ENCODE measurements at regions of chr4 and their contacts with region 1.

Region 1: GRCh38 chr4:75940692-75941253 is at the start of gene NAAA:
- DNase-seq: peak; percentile 91
- ATAC-seq: peak; percentile 75
- H3K4me3 ChIP-seq: peak within 1 kb of the TSS; percentile 80 to 98 (median 97)
- H3K4me3 Mint-ChIP-seq: peak within 1 kb of the TSS; percentile 99
- H3K27ac ChIP-seq: peak within 1 kb of the TSS; percentile 78 to 79
- H3K27ac Mint-ChIP-seq: peak within 1 kb of the TSS; percentile 98
- H3K4me1 ChIP-seq: peaks cover 5 to 14% of the 10 kb centered on the region in 2 donors
- H3K4me1 Mint-ChIP-seq: peaks cover 14% of the 10 kb centered on the region
- H3K27me3 ChIP-seq: no peaks in the 10 kb centered on the region
- H3K27me3 Mint-ChIP-seq: no peaks in the 10 kb centered on the region
- CTCF ChIP-seq: no peak
- total RNA-seq, gene NAAA: 50.4 and 51.4 TPM in 2 replicates

Region 2: GRCh38 chr4:74996996-74997395 is 943.8 kb before region 1 on chr4:
- CTCF ChIA-PET with region 1: no interaction called
- POLR2A ChIA-PET with region 1: no interaction called
- intact Hi-C with region 1: no loop called
- DNase-seq: no peak
- ATAC-seq: no peak
- H3K4me3 ChIP-seq: no peak overlapping the region
- H3K4me3 Mint-ChIP-seq: no peak overlapping the region
- H3K27ac ChIP-seq: no peak overlapping the region
- H3K27ac Mint-ChIP-seq: no peak overlapping the region
- H3K4me1 ChIP-seq: no peaks in the 10 kb centered on the region
- H3K4me1 Mint-ChIP-seq: peaks cover 9% of the 10 kb centered on the region
- H3K27me3 ChIP-seq: no peaks in the 10 kb centered on the region
- H3K27me3 Mint-ChIP-seq: no peaks in the 10 kb centered on the region
- CTCF ChIP-seq: no peak

Region 3: GRCh38 chr4:75514131-75514948 is 426.4 kb before region 1 on chr4 and contains the starts of genes RCHY1 and THAP6:
- CTCF ChIA-PET with region 1: no interaction called
- POLR2A ChIA-PET with region 1: interaction called, 3 read pairs
- intact Hi-C with region 1: loop called (anchors 1 kb)
- DNase-seq: peak; percentile 96
- ATAC-seq: peak; percentile 87
- H3K4me3 ChIP-seq: peak within 1 kb of the TSS; percentile 76 to 94 (median 85)
- H3K4me3 Mint-ChIP-seq: no peak within 1 kb of the TSS
- H3K27ac ChIP-seq: peak within 1 kb of the TSS; percentile 93 to 96
- H3K27ac Mint-ChIP-seq: peak within 1 kb of the TSS; percentile 97
- H3K4me1 ChIP-seq: peaks cover 29 to 32% of the 10 kb centered on the region in 2 donors
- H3K4me1 Mint-ChIP-seq: peaks cover 36% of the 10 kb centered on the region
- H3K27me3 ChIP-seq: no peaks in the 10 kb centered on the region
- H3K27me3 Mint-ChIP-seq: no peaks in the 10 kb centered on the region
- CTCF ChIP-seq: peak; percentile 7
- total RNA-seq, gene RCHY1: 33.3 and 34.5 TPM in 2 replicates
- total RNA-seq, gene THAP6: 34.5 and 38.3 TPM in 2 replicates

Region 4: GRCh38 chr4:75849461-75849860 is 91.3 kb before region 1 on chr4:
- CTCF ChIA-PET with region 1: no interaction called
- POLR2A ChIA-PET with region 1: no interaction called
- intact Hi-C with region 1: no loop called
- DNase-seq: no peak
- ATAC-seq: no peak
- H3K4me3 ChIP-seq: no peak overlapping the region
- H3K4me3 Mint-ChIP-seq: no peak overlapping the region
- H3K27ac ChIP-seq: no peak overlapping the region
- H3K27ac Mint-ChIP-seq: no peak overlapping the region
- H3K4me1 ChIP-seq: no peaks in the 10 kb centered on the region
- H3K4me1 Mint-ChIP-seq: peaks cover 6% of the 10 kb centered on the region
- H3K27me3 ChIP-seq: peaks cover 0 to 3% (median 0%) of the 10 kb centered on the region in 4 experiments
- H3K27me3 Mint-ChIP-seq: peaks cover 12% of the 10 kb centered on the region
- CTCF ChIP-seq: no peak

Region 5: DNA sequence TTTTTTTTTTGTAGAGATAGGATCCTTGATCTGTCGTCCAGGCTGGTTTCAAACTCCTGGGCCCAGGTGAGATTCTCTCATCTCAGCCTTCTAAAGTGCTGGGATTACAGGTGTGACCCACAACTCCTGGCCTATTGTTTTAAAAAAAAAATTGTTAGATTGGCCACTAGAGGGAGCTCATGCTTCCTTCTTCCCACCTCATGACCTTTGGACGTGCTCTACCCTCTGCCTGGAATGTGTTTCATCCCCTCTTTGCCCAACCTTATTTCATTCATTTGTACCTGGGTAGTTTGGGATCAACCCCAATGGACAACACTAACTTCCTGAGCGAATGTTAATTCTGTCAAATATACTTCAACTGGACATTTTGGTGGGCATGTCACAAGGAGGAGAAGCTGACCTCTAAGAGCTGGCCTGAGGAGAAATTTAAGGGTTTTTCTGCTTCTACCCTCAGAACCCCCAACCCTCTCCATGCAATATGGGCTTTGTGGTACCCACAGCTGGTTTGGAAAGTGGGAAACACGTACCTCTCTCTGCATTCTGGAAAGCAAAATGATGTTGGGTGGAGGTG is 44.9 kb before region 1 on chr4:
- CTCF ChIA-PET with region 1: interaction called, 17 read pairs
- POLR2A ChIA-PET with region 1: interaction called, 6 read pairs
- intact Hi-C with region 1: loop called (anchors 2 kb)
- DNase-seq: peak; percentile 73
- ATAC-seq: peak; percentile 68
- H3K4me3 ChIP-seq: no peak overlapping the region
- H3K4me3 Mint-ChIP-seq: no peak overlapping the region
- H3K27ac ChIP-seq: no peak overlapping the region
- H3K27ac Mint-ChIP-seq: no peak overlapping the region
- H3K4me1 ChIP-seq: no peaks in the 10 kb centered on the region
- H3K4me1 Mint-ChIP-seq: no peaks in the 10 kb centered on the region
- H3K27me3 ChIP-seq: no peaks in the 10 kb centered on the region
- H3K27me3 Mint-ChIP-seq: no peaks in the 10 kb centered on the region
- CTCF ChIP-seq: peak; percentile 80

Region 6: DNA sequence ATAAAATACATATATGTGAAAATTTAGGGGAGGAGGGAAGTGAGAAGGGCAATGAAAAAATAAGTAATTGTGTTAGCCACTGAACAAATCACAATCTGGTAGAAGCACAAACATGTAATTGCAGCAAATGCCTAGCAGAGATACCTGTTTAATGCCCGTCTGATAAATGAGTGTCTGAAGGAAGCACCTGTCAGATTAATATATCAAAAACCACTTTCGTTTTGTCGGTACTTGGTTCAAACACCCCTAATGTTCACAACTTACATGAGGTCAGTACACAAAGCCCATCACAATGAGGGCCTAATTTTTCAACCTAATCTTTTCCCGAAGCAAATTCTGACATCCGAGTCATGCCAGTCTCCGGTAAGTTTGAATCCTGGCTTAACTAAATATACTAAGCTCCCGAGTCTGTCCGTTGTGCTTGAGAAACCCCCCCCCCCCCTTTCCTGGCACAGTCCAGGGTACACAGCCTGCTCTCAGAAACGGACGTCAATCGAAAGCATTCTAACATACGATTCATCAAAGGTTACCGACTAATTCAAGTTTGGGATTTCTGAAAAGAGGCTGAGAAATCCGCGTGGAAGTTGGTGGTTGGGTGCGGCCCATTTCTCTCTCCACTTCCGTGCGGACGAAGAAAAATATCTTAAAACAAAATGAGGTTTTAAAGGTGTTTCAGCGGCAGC is 49.2 kb after region 1 on chr4:
- CTCF ChIA-PET with region 1: interaction called, 8 read pairs
- POLR2A ChIA-PET with region 1: no interaction called
- intact Hi-C with region 1: loop called (anchors 1 kb)
- DNase-seq: peak; percentile 27
- ATAC-seq: no peak
- H3K4me3 ChIP-seq: peak overlapping the region; percentile 51 to 88 (median 86)
- H3K4me3 Mint-ChIP-seq: peak overlapping the region; percentile 95
- H3K27ac ChIP-seq: peak overlapping the region; percentile 59 to 77
- H3K27ac Mint-ChIP-seq: peak overlapping the region; percentile 89
- H3K4me1 ChIP-seq: peaks cover 28 to 31% of the 10 kb centered on the region in 2 donors
- H3K4me1 Mint-ChIP-seq: peaks cover 37% of the 10 kb centered on the region
- H3K27me3 ChIP-seq: no peaks in the 10 kb centered on the region
- H3K27me3 Mint-ChIP-seq: peaks cover 9% of the 10 kb centered on the region
- CTCF ChIP-seq: no peak

Region 7: GRCh38 chr4:76213415-76214176 is 272.8 kb after region 1 on chr4 and contains the start of gene SCARB2:
- CTCF ChIA-PET with region 1: no interaction called
- POLR2A ChIA-PET with region 1: no interaction called
- intact Hi-C with region 1: loop called (anchors 2 kb)
- DNase-seq: peak; percentile 91
- ATAC-seq: peak; percentile 79
- H3K4me3 ChIP-seq: peak within 1 kb of the TSS; percentile 54 to 87 (median 71)
- H3K4me3 Mint-ChIP-seq: peak within 1 kb of the TSS; percentile 89
- H3K27ac ChIP-seq: peak within 1 kb of the TSS; percentile 85 to 86
- H3K27ac Mint-ChIP-seq: peak within 1 kb of the TSS; percentile 96
- H3K4me1 ChIP-seq: peaks cover 47 to 49% of the 10 kb centered on the region in 2 donors
- H3K4me1 Mint-ChIP-seq: peaks cover 47% of the 10 kb centered on the region
- H3K27me3 ChIP-seq: no peaks in the 10 kb centered on the region
- H3K27me3 Mint-ChIP-seq: no peaks in the 10 kb centered on the region
- CTCF ChIP-seq: no peak
- total RNA-seq, gene SCARB2: 30.3 and 31.5 TPM in 2 replicates